ENCODE measurements at regions of chr12 and their contacts with region 1.

Region 1: DNA sequence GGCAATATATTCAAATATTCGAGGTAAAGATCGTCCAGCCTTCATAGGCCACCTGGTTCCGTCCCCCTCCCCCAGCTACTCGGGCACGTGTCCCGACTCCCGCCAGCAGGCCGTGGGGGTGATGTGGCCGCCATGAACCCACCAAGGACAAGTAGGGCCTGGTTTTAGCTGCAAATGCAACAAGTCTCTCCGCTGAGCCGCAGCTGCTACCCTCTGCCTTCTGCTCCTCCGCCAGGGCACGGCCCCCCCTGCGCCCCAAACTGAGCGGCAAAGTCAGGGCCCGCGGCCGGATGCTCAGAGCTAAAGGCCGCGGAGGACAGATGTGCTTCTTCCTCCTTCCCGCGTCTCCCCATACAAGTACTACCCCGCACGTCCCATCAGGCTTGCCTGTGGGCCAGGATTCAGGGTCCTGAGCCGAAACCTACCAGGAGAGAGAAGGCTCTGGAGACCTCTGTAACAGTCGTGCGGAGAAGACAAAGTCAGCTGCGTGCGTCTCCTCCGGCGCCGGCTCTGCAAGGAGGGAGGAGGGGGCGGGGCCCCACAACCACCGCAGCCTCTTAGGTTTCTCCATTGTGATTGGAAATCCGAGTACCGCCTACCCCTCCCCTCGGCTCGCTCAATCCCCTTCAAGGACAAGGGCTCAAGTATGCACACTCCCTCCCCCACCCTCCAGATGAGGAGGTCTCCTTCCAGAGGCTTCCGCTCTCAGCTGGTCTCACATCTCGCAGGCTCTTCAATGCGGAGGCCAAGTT is at the start of gene LDHB:
- DNase-seq: peak; percentile 96
- ATAC-seq: peak; percentile 99
- H3K4me3 ChIP-seq: peak within 1 kb of the TSS; percentile 81
- H3K27ac ChIP-seq: peak within 1 kb of the TSS; percentile 89
- H3K4me1 ChIP-seq: peaks cover 2% of the 10 kb centered on the region; the same call in 1 of the 2 replicates
- H3K27me3 ChIP-seq: no peaks in the 10 kb centered on the region
- CTCF ChIP-seq: no peak
- POLR2A ChIP-seq: peak; percentile 84
- RAD21 ChIP-seq: no peak
- total RNA-seq, gene LDHB: 623 and 997 TPM in 2 replicates

Region 2: GRCh38 chr12:21501379-21501956 is 156.0 kb before region 1 on chr12 and contains the starts of genes GOLT1B and RECQL:
- CTCF ChIA-PET with region 1: no interaction called
- POLR2A ChIA-PET with region 1: no interaction called
- dilution Hi-C with region 1: no loop called
- in situ Hi-C with region 1: no loop called
- intact Hi-C with region 1: loop called (anchors 5 kb)
- DNase-seq: peak; percentile 99
- ATAC-seq: peak; percentile 96
- H3K4me3 ChIP-seq: peak within 1 kb of the TSS; percentile 60
- H3K27ac ChIP-seq: peak within 1 kb of the TSS; percentile 69
- H3K4me1 ChIP-seq: peaks cover 2% of the 10 kb centered on the region
- H3K27me3 ChIP-seq: no peaks in the 10 kb centered on the region
- CTCF ChIP-seq: no peak
- POLR2A ChIP-seq: peak; percentile 93
- RAD21 ChIP-seq: no peak
- total RNA-seq, gene GOLT1B: 50.5 and 83.9 TPM in 2 replicates
- total RNA-seq, gene RECQL: 67.0 and 118 TPM in 2 replicates

Region 3: DNA sequence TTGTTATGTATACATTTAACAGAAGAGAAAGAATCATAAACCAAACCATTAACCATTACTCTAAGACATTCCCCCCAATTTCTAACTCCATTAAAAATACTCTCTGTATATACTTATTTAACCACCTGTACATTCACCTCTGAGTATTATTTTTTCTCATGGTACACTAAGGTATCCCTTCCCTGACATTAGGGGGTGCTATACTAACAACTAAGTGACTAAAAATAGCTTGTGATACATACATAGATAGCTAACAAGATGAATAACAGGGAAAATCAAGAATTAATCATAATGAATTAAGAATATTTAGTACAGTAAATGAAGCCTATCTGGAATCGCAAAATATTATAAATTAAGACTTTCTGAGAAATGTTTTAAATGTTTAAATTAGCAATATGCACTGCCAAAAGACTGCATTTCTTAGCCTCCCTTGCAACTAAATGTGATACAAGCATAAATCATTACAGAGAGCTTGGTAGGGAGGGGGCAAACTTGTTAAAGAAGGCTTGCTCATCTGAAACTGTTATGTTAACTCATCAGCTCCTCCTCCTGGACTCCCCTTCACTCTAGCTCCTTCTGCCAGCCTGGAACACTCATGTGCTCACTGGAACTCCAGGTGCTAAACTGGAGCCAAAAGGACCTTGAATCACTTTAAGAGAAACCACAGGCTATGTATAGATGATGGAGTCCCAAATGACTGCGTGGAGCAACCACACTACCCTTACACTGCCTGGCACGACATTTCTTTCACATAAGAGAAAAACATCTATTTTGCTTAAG is 872.0 kb after region 1 on chr12:
- CTCF ChIA-PET with region 1: no interaction called
- POLR2A ChIA-PET with region 1: no interaction called
- dilution Hi-C with region 1: no loop called
- in situ Hi-C with region 1: no loop called
- intact Hi-C with region 1: loop called (anchors 10 kb)
- DNase-seq: peak; percentile 63
- ATAC-seq: peak; percentile 40; the same call in 1 of the 2 replicates
- H3K4me3 ChIP-seq: no peak overlapping the region
- H3K27ac ChIP-seq: peak overlapping the region; percentile 69
- H3K4me1 ChIP-seq: peaks cover 7% of the 10 kb centered on the region
- H3K27me3 ChIP-seq: no peaks in the 10 kb centered on the region
- CTCF ChIP-seq: peak; percentile 44
- POLR2A ChIP-seq: no peak
- RAD21 ChIP-seq: no peak

Measured in IMR-90 (cell line).